ENCODE measurements at regions of chr5 and their contacts with region 1.

Region 1: GRCh38 chr5:137743031-137743640 is 7.2 kb upstream of the KLHL3 start:
- DNase-seq: no peak
- ATAC-seq: peak; percentile 63

Region 2: GRCh38 chr5:137629646-137630045 is 113.5 kb before region 1 on chr5:
- intact Hi-C with region 1: loop called (anchors 2 kb)
- DNase-seq: no peak
- ATAC-seq: peak; percentile 58

Region 3: DNA sequence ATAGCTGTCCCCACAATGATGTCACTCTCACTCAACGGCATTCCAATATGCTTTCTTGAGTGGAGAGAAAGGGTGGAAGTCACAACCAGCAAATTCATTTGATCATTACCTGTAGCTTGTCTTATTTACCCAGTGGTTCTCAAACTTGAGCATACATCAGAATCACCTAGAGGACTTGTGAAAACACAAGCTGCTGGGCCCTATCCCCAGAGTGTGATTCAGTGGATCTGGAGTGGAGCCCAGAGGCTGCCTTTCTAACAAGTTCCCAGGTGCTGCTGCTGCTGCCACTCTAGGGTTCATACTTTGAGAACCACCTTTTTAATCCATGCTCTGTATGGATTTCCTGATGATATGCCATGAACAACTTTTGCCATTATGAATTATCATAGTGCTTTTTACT is 102.0 kb before region 1 on chr5:
- intact Hi-C with region 1: no loop called
- DNase-seq: no peak
- ATAC-seq: no peak

Region 4: DNA sequence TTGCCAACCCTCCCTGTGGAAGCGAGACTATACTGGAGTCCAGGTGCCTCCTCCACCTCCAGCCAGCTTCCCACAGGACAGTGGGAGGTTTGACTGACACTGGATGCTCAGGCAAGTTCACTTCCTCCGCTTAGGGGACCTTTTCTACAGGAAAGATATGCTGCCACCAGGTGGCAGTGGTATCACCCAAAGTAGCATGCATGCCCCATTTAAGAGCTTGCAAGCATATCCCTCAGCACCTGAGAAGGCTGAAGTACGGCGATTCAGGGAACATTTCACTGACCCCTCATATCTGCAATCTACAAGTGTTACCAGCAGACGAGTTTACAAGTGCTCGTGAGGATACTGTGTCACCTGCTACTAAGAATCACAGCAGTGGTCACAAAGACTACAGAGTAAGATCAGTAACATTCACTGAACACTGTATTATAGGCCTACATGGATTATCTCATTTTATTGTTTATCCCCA is 82.8 kb before region 1 on chr5:
- intact Hi-C with region 1: loop called (anchors 2 kb)
- DNase-seq: no peak
- ATAC-seq: peak; percentile 73

Measured in Right ventricle myocardium inferior (tissue), 1 donor.